ENCODE measurements at regions of chr10 and their contacts with region 1.

Region 1: GRCh38 chr10:52951824-52952223 is 179.2 kb upstream of the MBL2 start:
- DNase-seq: peak; percentile 53
- CTCF ChIP-seq: peak; percentile 62

Region 2: DNA sequence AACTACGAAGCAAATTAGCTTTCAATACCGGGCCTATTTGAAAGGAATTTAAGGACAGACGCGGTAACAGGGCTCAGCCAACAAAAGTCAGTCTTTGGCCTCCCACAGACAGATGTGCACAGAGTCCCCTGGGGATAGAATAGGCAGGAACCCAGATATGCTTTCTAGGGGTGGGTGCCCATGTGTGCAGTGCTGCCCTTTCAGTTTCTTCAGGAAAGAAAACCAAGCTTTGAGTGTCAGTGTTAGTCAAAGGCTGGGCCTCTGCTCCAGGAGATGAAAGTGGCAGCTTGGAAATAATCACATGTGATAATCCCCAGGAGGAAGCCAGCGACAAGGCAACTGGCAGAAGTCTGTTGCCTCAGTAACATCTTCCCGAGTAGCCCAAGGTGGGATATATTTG is 1208.7 kb before region 1 on chr10:
- CTCF ChIA-PET with region 1: no interaction called
- POLR2A ChIA-PET with region 1: no interaction called
- DNase-seq: no peak
- CTCF ChIP-seq: no peak

Region 3: GRCh38 chr10:52533986-52534385 is 417.8 kb before region 1 on chr10:
- CTCF ChIA-PET with region 1: no interaction called
- POLR2A ChIA-PET with region 1: no interaction called
- DNase-seq: no peak
- CTCF ChIP-seq: no peak

Region 4: DNA sequence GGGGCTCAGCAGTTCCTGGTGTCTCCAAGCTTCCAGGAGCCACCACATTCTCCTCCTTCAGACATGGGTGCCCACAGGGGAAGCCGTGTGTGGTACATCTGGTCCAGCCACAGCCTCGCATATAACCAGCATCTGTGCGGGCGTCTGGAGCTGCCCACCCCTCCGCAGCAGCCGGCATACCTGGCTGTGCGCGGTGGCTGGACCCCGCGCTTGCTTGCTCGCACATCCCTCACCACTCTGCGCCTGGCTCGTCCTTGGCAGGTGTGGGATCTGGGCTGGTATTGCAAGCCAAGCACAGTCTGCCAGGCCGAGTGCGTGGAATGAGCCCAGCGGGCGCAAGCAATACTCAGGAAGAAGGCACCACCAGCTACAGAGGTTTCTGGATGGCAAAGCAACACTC is 61.5 kb before region 1 on chr10:
- CTCF ChIA-PET with region 1: no interaction called
- POLR2A ChIA-PET with region 1: no interaction called
- DNase-seq: no peak
- CTCF ChIP-seq: no peak

Region 5: DNA sequence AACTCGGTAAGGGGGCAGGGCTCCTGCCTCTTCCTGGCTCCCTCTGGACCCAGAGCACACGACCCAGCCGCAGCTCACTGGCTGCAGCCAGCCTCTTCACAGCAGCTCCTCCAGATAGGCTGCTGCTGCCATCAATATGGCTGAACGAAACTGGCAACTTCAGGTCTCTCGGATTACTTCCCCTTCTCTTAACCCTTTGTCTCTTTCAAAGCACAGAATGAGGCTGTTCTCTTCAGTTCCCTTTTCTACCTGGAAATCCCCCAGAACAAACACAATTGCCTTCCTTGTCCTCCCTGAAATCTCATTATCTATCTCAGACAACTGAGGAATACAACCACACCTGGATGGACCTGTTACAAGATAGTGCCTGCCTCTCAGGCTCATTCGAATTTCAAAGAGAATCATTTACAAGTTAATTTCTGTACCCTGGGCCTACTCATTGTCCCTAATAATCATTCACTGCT is 14.1 kb after region 1 on chr10:
- CTCF ChIA-PET with region 1: interaction called, 13 read pairs
- POLR2A ChIA-PET with region 1: no interaction called
- DNase-seq: peak; percentile 68
- CTCF ChIP-seq: no peak